A673 (cell line): ENCODE measurements at regions of chr14 and their contacts with region 1.

Region 1: DNA sequence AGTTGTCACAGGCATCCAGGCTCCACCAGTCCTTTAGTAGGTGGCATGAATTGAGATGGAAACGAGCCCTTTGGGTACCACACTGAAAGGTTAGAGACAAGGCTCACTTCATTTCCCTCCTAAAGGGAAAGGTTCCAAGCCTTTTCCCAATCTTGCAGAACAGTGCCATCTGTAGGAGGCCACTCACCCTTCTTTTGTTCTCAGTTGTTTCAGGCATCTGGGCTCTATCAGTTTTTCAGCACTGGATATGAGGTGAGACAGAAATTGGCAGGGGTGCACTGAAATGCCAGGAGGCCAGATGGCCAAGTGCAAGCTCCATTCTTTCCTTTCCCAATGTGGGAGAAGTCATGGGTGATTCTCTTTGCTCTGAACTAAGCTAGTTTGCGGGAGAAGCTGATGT is 15.2 kb downstream of the FBXO33 start:
- DNase-seq: peak; percentile 55
- H3K4me3 ChIP-seq: no peak overlapping the region
- H3K27ac ChIP-seq: no peak overlapping the region
- H3K4me1 ChIP-seq: no peaks in the 10 kb centered on the region
- H3K27me3 ChIP-seq: no peaks in the 10 kb centered on the region
- CTCF ChIP-seq: peak; percentile 51

Region 2: DNA sequence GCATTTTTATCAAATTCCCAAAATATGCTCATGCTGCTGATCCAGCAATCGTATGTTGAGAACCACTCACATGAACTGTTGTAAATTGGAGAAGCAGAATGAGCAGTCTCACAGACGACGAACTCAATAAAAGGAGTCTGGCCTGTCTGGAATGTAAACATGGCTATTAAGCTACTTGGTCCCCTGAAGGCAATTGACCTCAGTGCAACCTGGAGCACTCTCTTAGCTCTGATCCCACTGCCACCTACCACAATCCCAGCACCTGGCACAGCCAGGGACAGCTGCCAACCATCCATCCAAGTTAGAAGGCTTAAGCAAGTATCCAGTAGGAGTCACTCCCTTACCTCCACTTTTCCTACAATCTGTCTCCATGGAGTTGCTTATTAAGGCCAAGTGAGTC is 754.2 kb before region 1 on chr14:
- CTCF ChIA-PET with region 1: no interaction called
- POLR2A ChIA-PET with region 1: no interaction called
- intact Hi-C with region 1: no loop called
- DNase-seq: no peak
- H3K4me3 ChIP-seq: no peak overlapping the region
- H3K27ac ChIP-seq: no peak overlapping the region
- H3K4me1 ChIP-seq: no peaks in the 10 kb centered on the region
- H3K27me3 ChIP-seq: no peaks in the 10 kb centered on the region
- CTCF ChIP-seq: no peak

Region 3: GRCh38 chr14:38931969-38932652 is 484.9 kb before region 1 on chr14:
- CTCF ChIA-PET with region 1: no interaction called
- POLR2A ChIA-PET with region 1: no interaction called
- intact Hi-C with region 1: no loop called
- DNase-seq: no peak
- H3K4me3 ChIP-seq: no peak overlapping the region
- H3K27ac ChIP-seq: no peak overlapping the region
- H3K4me1 ChIP-seq: no peaks in the 10 kb centered on the region
- H3K27me3 ChIP-seq: no peaks in the 10 kb centered on the region
- CTCF ChIP-seq: no peak

Region 4: DNA sequence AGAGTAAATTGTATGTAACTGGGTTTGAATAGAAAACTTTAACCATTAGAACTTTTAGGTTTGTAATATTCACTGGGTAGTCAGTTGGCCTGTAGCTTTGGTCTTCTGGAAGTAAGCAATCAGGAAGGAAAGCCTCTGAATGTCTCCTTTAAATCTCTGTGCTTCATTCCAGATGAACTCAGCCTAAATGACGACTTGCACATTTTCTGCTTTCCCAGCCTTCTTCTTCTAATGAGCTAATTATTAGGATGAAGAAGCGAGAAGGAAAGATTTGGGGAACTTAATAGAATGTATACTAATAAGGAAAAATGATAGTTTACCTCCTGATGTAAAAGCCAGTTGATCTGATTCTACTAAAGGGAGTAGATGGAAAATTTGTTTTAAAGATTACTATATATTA is 92.9 kb before region 1 on chr14:
- CTCF ChIA-PET with region 1: no interaction called
- POLR2A ChIA-PET with region 1: interaction called, 10 read pairs
- intact Hi-C with region 1: no loop called
- DNase-seq: no peak
- H3K4me3 ChIP-seq: no peak overlapping the region
- H3K27ac ChIP-seq: no peak overlapping the region
- H3K4me1 ChIP-seq: no peaks in the 10 kb centered on the region
- H3K27me3 ChIP-seq: no peaks in the 10 kb centered on the region
- CTCF ChIP-seq: no peak

Region 5: GRCh38 chr14:39351708-39352107 is 65.3 kb before region 1 on chr14:
- CTCF ChIA-PET with region 1: no interaction called
- POLR2A ChIA-PET with region 1: no interaction called
- intact Hi-C with region 1: no loop called
- DNase-seq: no peak
- H3K4me3 ChIP-seq: no peak overlapping the region
- H3K27ac ChIP-seq: no peak overlapping the region
- H3K4me1 ChIP-seq: no peaks in the 10 kb centered on the region
- H3K27me3 ChIP-seq: no peaks in the 10 kb centered on the region
- CTCF ChIP-seq: no peak